ENCODE measurements at regions of chr1 and their contacts with region 1.

Region 1: DNA sequence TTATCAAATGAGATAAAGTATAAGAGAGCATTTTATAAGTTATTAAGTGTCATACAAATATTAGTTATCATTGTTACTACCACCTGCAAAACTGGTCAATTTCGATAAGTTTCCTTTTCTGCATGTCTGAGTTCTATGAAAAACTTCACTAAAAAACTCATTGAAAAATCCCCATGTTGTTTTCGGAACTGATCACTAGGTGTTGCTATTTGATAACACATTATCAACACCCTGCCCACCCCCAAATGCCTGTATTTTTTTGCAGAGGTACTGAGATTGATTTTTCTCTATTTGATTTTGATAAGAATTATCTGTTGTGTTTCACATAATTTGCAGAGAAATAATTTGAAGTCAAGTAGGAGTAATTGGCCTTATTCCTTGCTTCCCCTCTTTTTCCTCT is 22.1 kb upstream of the DISP1 start:
- DNase-seq: peak in 1 of 2 experiments; percentile 19
- H3K4me3 ChIP-seq: no peak overlapping the region
- H3K4me3 Mint-ChIP-seq: no peak overlapping the region
- H3K27ac Mint-ChIP-seq: no peak overlapping the region
- H3K4me1 ChIP-seq: 0 out of 2 replicates have a peak, but pooled peaks cover 4% of the 10 kb centered on the region
- H3K4me1 Mint-ChIP-seq: peaks cover 20% of the 10 kb centered on the region
- H3K27me3 ChIP-seq: no peaks in the 10 kb centered on the region
- H3K27me3 Mint-ChIP-seq: no peaks in the 10 kb centered on the region
- CTCF ChIP-seq: peak; percentile 52 to 62

Region 2: DNA sequence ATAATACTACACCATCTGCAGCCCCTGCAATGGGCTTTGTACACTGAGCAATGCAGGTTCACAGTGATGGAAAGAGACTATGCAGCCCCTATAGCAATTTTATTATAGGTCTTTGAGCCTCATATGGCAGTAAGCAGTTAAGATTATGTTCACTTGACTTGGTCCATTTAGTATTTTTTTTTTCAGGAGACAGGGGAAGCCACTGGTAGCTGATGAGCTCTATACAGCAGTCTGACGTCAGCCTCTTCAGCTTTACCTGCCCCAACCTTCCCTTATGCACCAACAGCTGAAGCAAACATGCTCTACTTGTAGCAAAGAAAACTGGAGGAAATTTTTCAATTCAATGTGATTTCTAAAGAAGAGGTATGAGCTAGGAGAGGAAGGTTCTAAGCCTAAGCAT is 112.7 kb before region 1 on chr1:
- CTCF ChIA-PET with region 1: no interaction called
- POLR2A ChIA-PET with region 1: no interaction called
- intact Hi-C with region 1: no loop called
- DNase-seq: no peak
- H3K4me3 ChIP-seq: no peak overlapping the region
- H3K4me3 Mint-ChIP-seq: no peak overlapping the region
- H3K27ac Mint-ChIP-seq: no peak overlapping the region
- H3K4me1 ChIP-seq: no peaks in the 10 kb centered on the region
- H3K4me1 Mint-ChIP-seq: no peaks in the 10 kb centered on the region
- H3K27me3 ChIP-seq: no peaks in the 10 kb centered on the region
- H3K27me3 Mint-ChIP-seq: no peaks in the 10 kb centered on the region
- CTCF ChIP-seq: no peak

Region 3: DNA sequence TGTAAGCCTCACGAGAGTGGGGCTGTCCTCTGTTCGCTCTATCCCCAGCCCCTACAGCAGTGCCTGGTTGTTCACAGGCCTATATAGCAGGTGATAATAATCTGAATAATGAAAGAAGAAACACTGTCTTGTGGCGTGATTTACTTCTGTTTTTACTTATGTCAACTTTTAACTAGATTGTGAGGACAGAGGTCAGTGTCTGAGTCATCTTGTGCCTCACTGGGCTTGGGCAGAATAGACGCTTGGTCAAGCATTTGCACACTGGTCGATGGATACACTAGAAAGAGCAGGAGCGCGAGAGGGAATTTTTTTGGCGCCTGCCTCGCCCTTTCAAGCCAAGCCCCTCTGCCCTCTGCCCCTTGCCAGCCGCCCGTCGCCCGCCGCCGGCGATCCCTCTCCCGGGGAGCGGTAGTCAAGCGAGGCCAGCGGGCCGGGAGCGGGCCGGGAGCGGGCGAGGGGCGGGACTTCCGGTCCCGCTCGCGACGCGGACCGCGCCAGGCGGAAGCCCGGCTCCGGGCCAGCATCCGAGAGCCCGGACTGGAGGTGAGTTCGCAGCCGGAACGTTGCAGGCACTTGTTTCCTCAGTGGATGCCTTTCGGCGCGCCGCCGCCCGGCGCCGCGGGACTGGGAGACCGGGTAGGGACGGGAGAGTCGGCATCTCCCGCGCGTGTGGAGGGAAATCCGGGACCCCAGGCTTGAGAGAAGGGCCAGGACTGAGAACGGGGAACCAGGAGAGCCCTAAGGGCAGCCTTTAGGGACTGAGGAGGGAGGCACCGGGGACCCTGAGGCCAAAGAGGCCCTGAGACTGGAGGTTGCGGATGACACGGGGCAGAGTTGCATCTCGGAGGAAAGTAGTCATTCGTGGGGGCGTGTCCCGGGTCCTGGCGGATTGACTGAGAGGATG is 22.0 kb after region 1 on chr1 and contains the start of gene DISP1:
- CTCF ChIA-PET with region 1: no interaction called
- POLR2A ChIA-PET with region 1: no interaction called
- intact Hi-C with region 1: no loop called
- DNase-seq: peak; percentile 83 to 86
- H3K4me3 ChIP-seq: peak within 1 kb of the TSS; percentile 55
- H3K4me3 Mint-ChIP-seq: peak within 1 kb of the TSS; percentile 97
- H3K27ac Mint-ChIP-seq: peak within 1 kb of the TSS; percentile 72
- H3K4me1 ChIP-seq: peaks cover 25% of the 10 kb centered on the region
- H3K4me1 Mint-ChIP-seq: peaks cover 19% of the 10 kb centered on the region
- H3K27me3 ChIP-seq: no peaks in the 10 kb centered on the region
- H3K27me3 Mint-ChIP-seq: no peaks in the 10 kb centered on the region
- CTCF ChIP-seq: no peak
- total RNA-seq, gene DISP1: 6.6 and 7.1 TPM in 2 replicates

Region 4: DNA sequence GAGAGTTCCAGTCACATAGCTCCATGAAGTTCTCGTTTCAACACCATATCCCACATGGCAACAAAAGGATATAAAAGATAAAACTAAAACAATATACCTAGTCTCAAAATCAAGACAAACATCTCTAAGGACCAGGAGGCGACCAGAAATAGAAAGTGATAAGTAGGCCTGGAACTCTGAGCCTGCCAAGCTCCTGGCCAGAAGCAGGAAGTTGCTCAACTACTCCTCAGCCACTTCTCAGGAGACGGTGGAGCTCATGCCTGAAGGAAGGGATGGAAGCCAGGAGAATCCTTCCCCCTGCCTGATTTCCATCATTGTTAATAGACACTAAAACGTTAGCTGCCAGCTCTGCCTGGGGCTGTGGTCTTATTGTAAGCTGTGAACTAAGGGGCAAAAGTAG is 116.8 kb after region 1 on chr1:
- CTCF ChIA-PET with region 1: no interaction called
- POLR2A ChIA-PET with region 1: no interaction called
- intact Hi-C with region 1: loop called (anchors 5 kb)
- DNase-seq: no peak
- H3K4me3 ChIP-seq: no peak overlapping the region
- H3K4me3 Mint-ChIP-seq: no peak overlapping the region
- H3K27ac Mint-ChIP-seq: no peak overlapping the region
- H3K4me1 ChIP-seq: no peaks in the 10 kb centered on the region
- H3K4me1 Mint-ChIP-seq: peaks cover 14% of the 10 kb centered on the region
- H3K27me3 ChIP-seq: no peaks in the 10 kb centered on the region
- H3K27me3 Mint-ChIP-seq: no peaks in the 10 kb centered on the region
- CTCF ChIP-seq: no peak

Region 5: GRCh38 chr1:223123011-223123610 is 330.4 kb after region 1 on chr1:
- CTCF ChIA-PET with region 1: interaction called, 5 read pairs
- POLR2A ChIA-PET with region 1: no interaction called
- intact Hi-C with region 1: loop called (anchors 1 kb)
- DNase-seq: no peak
- H3K4me3 ChIP-seq: no peak overlapping the region
- H3K4me3 Mint-ChIP-seq: peak overlapping the region; percentile 49
- H3K27ac Mint-ChIP-seq: no peak overlapping the region
- H3K4me1 ChIP-seq: peaks cover 29% of the 10 kb centered on the region
- H3K4me1 Mint-ChIP-seq: peaks cover 20% of the 10 kb centered on the region
- H3K27me3 ChIP-seq: no peaks in the 10 kb centered on the region
- H3K27me3 Mint-ChIP-seq: no peaks in the 10 kb centered on the region
- CTCF ChIP-seq: no peak

Measured in Caco-2 (cell line).